Activated B cell treated with CpG ODN at 0.5 μM for 24 hours (primary cell): ENCODE measurements at regions of chr6 and their contacts with region 1.

Region 1: GRCh38 chr6:37705239-37706051 is 7.8 kb upstream of the MDGA1 start:
- DNase-seq: peak; percentile 72
- ATAC-seq: peak; percentile 91
- H3K4me3 Mint-ChIP-seq: peak overlapping the region; percentile 86
- H3K27ac Mint-ChIP-seq: peak overlapping the region; percentile 71
- H3K4me1 Mint-ChIP-seq: peaks cover 24% of the 10 kb centered on the region
- H3K27me3 Mint-ChIP-seq: no peaks in the 10 kb centered on the region
- CTCF ChIP-seq: no peak

Region 2: GRCh38 chr6:37860226-37860839 is 154.9 kb after region 1 on chr6:
- CTCF ChIA-PET with region 1: interaction called, 3 read pairs
- POLR2A ChIA-PET with region 1: no interaction called
- intact Hi-C with region 1: loop called (anchors 2 kb)
- DNase-seq: no peak
- ATAC-seq: no peak
- H3K4me3 Mint-ChIP-seq: no peak overlapping the region
- H3K27ac Mint-ChIP-seq: no peak overlapping the region
- H3K4me1 Mint-ChIP-seq: peaks cover 31% of the 10 kb centered on the region
- H3K27me3 Mint-ChIP-seq: no peaks in the 10 kb centered on the region
- CTCF ChIP-seq: no peak